Caco-2 (cell line): ENCODE measurements at regions of chr6 and their contacts with region 1.

Region 1: DNA sequence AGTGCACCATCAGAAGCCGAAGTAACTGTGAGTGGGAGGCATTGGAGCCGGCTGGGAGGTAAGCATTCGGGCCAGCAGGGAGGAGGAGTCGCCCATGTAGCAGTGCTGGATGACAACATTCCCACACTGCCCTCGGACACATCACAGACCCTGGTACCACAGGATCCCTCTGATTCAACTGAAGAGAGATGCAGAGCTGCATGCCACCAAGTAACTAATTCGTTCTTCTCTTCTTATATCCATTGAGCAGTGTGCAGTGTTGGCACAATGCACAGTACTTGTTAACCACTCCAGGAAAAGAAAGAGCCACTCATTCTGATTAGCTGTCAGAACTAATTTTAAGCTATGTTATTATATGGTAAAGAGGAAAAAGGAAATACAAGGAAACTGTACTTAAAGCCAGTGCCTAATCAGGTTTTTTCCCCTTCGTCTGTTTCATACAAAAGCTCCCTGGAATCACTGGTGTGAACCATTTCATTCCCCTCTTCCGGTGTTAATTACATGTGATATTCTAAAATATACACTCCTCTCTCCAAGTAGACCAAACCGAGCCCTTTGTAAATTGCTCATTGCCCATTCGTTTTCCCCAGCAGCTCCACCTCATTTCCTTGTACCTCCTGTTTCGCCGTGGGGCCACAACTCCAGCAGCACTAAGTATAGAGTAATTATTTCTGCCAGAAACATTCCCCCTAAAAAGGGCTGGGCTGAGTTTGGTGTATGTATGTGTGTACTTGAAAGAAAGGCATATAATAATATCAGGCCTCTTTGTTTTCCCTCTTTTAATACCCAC is 32.4 kb upstream of the ADTRP start:
- DNase-seq: no peak
- H3K4me3 ChIP-seq: no peak overlapping the region
- H3K4me3 Mint-ChIP-seq: no peak overlapping the region
- H3K27ac Mint-ChIP-seq: no peak overlapping the region
- H3K4me1 ChIP-seq: peaks cover 20% of the 10 kb centered on the region
- H3K4me1 Mint-ChIP-seq: peaks cover 8% of the 10 kb centered on the region
- H3K27me3 ChIP-seq: no peaks in the 10 kb centered on the region
- H3K27me3 Mint-ChIP-seq: no peaks in the 10 kb centered on the region
- CTCF ChIP-seq: no peak

Region 2: GRCh38 chr6:11791354-11792107 is 19.5 kb before region 1 on chr6:
- CTCF ChIA-PET with region 1: no interaction called
- POLR2A ChIA-PET with region 1: no interaction called
- intact Hi-C with region 1: no loop called
- DNase-seq: no peak
- H3K4me3 ChIP-seq: no peak overlapping the region
- H3K4me3 Mint-ChIP-seq: no peak overlapping the region
- H3K27ac Mint-ChIP-seq: no peak overlapping the region
- H3K4me1 ChIP-seq: 0 out of 2 replicates have a peak, but pooled peaks cover 4% of the 10 kb centered on the region
- H3K4me1 Mint-ChIP-seq: no peaks in the 10 kb centered on the region
- H3K27me3 ChIP-seq: no peaks in the 10 kb centered on the region
- H3K27me3 Mint-ChIP-seq: no peaks in the 10 kb centered on the region
- CTCF ChIP-seq: no peak

Region 3: GRCh38 chr6:12039540-12040459 is 228.8 kb after region 1 on chr6:
- CTCF ChIA-PET with region 1: no interaction called
- POLR2A ChIA-PET with region 1: interaction called, 14 read pairs
- intact Hi-C with region 1: no loop called
- DNase-seq: no peak
- H3K4me3 ChIP-seq: no peak overlapping the region
- H3K4me3 Mint-ChIP-seq: no peak overlapping the region
- H3K27ac Mint-ChIP-seq: no peak overlapping the region
- H3K4me1 ChIP-seq: no peaks in the 10 kb centered on the region
- H3K4me1 Mint-ChIP-seq: peaks cover 5% of the 10 kb centered on the region
- H3K27me3 ChIP-seq: no peaks in the 10 kb centered on the region
- H3K27me3 Mint-ChIP-seq: no peaks in the 10 kb centered on the region
- CTCF ChIP-seq: no peak